AG04449 (cell line): ENCODE measurements at regions of chr7 and their contacts with region 1.

Region 1: GRCh38 chr7:94301024-94301586 is 93.6 kb upstream of the COL1A2 start:
- DNase-seq: no peak
- H3K4me3 ChIP-seq: peak overlapping the region; percentile 40
- CTCF ChIP-seq: peak; percentile 19

Region 2: DNA sequence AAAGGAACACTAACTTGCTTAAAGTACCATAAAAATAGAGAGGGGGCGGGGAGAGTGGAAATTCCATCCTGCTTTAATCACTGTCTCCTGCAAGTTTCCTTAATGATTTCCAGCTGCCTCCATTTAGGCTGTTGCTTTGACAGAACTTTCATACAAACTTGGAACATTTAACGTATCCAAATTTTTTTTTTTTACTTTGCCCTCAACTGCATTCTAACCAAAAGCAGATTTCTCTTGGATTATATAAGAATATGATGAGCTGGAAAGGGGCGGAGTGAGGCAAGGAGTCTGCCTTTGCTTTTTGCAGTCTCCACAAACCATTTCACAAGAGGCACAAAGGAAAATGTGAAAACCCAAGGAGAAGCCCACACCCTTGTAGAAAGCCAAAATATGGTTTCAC is 47.0 kb after region 1 on chr7:
- CTCF ChIA-PET with region 1: interaction called, 3 read pairs
- POLR2A ChIA-PET with region 1: interaction called, 48 read pairs
- DNase-seq: peak; percentile 94
- H3K4me3 ChIP-seq: no peak overlapping the region
- CTCF ChIP-seq: no peak

Region 3: GRCh38 chr7:94368371-94368791 is 67.3 kb after region 1 on chr7:
- CTCF ChIA-PET with region 1: interaction called, 18 read pairs
- POLR2A ChIA-PET with region 1: interaction called, 54 read pairs
- DNase-seq: peak; percentile 58
- H3K4me3 ChIP-seq: peak overlapping the region; percentile 41
- CTCF ChIP-seq: no peak

Region 4: GRCh38 chr7:94374231-94374630 is 73.1 kb after region 1 on chr7:
- CTCF ChIA-PET with region 1: interaction called, 18 read pairs
- POLR2A ChIA-PET with region 1: interaction called, 74 read pairs
- DNase-seq: no peak
- H3K4me3 ChIP-seq: peak overlapping the region; percentile 43
- CTCF ChIP-seq: no peak

Region 5: GRCh38 chr7:94414481-94414880 is 113.4 kb after region 1 on chr7:
- CTCF ChIA-PET with region 1: interaction called, 38 read pairs
- POLR2A ChIA-PET with region 1: interaction called, 72 read pairs
- DNase-seq: no peak
- H3K4me3 ChIP-seq: no peak overlapping the region
- CTCF ChIP-seq: no peak